ENCODE measurements at regions of chrX and their contacts with region 1.

Region 1: DNA sequence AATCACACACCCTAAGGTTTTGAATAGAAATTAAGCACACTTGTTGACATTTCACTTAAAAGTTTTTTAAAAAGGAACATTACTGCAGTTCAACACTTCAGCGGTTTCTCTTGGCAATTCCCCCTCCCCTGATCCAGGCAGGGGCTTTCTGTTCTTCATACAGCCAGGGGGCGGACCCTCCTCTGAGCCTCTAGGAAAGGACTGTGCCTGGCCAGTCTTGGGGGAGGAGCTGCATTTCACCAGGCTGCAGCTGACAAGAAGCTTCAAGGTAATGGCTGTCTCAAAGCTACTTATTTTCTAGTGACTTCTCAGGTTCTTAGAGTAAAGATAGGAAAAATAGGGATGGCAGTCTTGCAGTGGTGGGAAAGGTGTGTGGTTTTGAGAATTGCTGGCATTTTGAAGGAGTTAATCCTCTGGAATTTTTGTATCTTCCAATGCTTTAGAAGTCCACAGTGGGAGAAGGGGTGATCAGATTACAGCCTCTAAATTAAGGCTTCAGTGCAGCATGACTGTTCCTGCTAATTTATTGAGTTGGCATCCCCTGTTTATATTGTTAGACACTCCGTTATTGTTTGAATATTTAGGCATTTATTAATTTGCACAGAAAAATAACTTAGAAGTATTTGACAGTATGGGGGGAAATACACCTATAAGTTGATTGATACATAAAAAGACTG is 33.5 kb downstream of the PWWP3B start:
- DNase-seq: no peak
- H3K4me3 ChIP-seq: no peak overlapping the region
- H3K27ac ChIP-seq: no peak overlapping the region
- H3K4me1 ChIP-seq: no peaks in the 10 kb centered on the region
- H3K27me3 ChIP-seq: peaks cover 16% of the 10 kb centered on the region
- CTCF ChIP-seq: no peak

Region 2: DNA sequence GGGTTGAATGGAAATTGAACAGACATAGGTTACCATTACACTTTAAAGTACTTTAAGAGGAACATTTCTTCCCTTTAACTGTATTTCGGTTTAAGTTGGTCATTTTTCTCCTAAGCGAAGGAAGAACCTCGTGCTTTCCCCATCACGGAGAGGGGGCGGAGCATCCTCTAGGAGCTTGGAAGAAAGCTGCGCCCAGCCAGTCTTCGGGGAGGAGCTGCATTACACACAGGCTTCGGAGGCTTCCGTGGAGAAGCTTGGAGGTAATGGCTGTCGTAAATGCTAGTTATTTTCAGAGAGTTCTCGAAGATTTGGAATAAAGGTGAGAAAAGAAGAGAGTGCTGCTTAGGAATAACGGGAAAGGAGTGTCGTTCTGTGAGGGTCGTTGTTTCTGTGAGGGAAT is 33.5 kb before region 1 on chrX and contains the start of gene PWWP3B:
- CTCF ChIA-PET with region 1: no interaction called
- dilution Hi-C with region 1: no loop called
- in situ Hi-C with region 1: no loop called
- intact Hi-C with region 1: no loop called
- DNase-seq: peak; percentile 44
- H3K4me3 ChIP-seq: peak within 1 kb of the TSS in 1 of 3 experiments; percentile 41
- H3K27ac ChIP-seq: no peak within 1 kb of the TSS
- H3K4me1 ChIP-seq: no peaks in the 10 kb centered on the region
- H3K27me3 ChIP-seq: peaks cover 2% of the 10 kb centered on the region
- CTCF ChIP-seq: no peak
- total RNA-seq, gene PWWP3B: 0.12 to 1.2 TPM

Region 3: GRCh38 chrX:106331606-106332005 is 130.0 kb after region 1 on chrX:
- CTCF ChIA-PET with region 1: no interaction called
- dilution Hi-C with region 1: no loop called
- in situ Hi-C with region 1: no loop called
- intact Hi-C with region 1: loop called (anchors 10 kb)
- DNase-seq: no peak
- H3K4me3 ChIP-seq: no peak overlapping the region
- H3K27ac ChIP-seq: no peak overlapping the region
- H3K4me1 ChIP-seq: no peaks in the 10 kb centered on the region
- H3K27me3 ChIP-seq: no peaks in the 10 kb centered on the region
- CTCF ChIP-seq: no peak

Measured in mammary epithelial cell (primary cell).